Activated CD8-positive, alpha-beta T cell treated with anti-CD3 and anti-CD28 coated beads, Interleukin-2, amount 10 ng/mL, durations not matched to agents 7 days and 5 days (primary cell): ENCODE measurements at regions of chr7 and their contacts with region 1.

Region 1: GRCh38 chr7:12211054-12211710 is at the start of gene TMEM106B:
- DNase-seq: peak; percentile 98
- ATAC-seq: peak; percentile 93
- H3K4me3 Mint-ChIP-seq: peak within 1 kb of the TSS; percentile 91
- H3K27ac Mint-ChIP-seq: peak within 1 kb of the TSS; percentile 99
- H3K4me1 Mint-ChIP-seq: peaks cover 28% of the 10 kb centered on the region
- H3K27me3 Mint-ChIP-seq: peaks cover 7% of the 10 kb centered on the region
- total RNA-seq, gene TMEM106B: 43.7 to 48.9 TPM

Region 2: DNA sequence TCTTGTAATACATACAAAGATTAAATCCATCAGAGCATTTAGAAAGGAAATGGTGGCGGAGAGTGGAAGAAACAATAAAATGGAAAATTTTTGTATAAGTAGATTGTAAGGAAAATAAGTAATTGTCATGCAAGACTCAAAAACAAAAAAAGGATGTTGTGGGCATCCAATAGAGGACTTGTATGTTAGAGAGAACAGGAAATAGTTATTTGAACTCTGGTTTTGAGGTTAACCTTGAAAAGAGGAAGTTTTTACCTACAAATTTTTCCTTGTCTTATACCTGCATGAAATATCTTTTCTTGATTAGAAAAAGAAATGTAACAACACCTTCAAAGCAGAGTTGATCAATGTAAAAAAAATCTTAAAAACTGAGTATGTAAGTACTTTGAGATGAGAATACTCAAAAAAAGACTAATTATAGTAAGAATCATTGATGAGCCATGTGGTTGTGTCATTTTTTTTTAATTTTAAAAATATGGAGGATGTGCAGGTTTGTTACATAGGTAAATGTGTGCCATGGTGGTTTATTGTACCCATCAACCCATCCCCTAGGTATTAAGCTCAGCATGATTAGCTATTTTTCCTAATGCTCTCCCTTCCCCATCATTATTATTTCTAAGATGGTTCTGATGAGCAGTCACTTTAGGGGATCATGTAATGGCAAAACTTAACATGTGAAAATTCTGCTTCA is 11.9 kb after region 1 on chr7:
- CTCF ChIA-PET with region 1: interaction called, 3 read pairs
- POLR2A ChIA-PET with region 1: interaction called, 11 read pairs
- DNase-seq: no peak
- ATAC-seq: peak; percentile 82
- H3K4me3 Mint-ChIP-seq: peak overlapping the region; percentile 57
- H3K27ac Mint-ChIP-seq: peak overlapping the region; percentile 80
- H3K4me1 Mint-ChIP-seq: peaks cover 59% of the 10 kb centered on the region
- H3K27me3 Mint-ChIP-seq: no peaks in the 10 kb centered on the region

Region 3: DNA sequence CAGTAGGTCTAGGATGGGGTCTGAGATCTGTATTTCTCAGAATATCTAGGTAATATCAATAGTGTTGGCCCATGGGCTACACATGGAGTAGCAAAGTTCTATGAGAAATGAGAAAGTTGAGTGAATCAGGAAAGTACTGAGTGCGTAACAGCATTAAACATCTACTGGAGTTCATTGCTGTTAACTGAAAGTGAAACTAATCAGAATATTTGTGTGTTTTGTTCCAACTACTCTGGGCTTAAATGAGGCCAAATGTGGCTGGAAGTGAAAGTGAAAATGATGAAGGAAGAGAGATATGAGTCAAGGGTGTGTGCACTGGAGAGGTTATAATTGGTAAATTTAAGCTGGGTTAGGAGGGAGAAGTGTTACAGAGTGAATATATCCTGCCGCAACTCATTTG is 46.4 kb after region 1 on chr7:
- CTCF ChIA-PET with region 1: interaction called, 12 read pairs
- POLR2A ChIA-PET with region 1: interaction called, 11 read pairs
- DNase-seq: peak; percentile 71
- ATAC-seq: peak; percentile 99
- H3K4me3 Mint-ChIP-seq: no peak overlapping the region
- H3K27ac Mint-ChIP-seq: no peak overlapping the region
- H3K4me1 Mint-ChIP-seq: peaks cover 14% of the 10 kb centered on the region
- H3K27me3 Mint-ChIP-seq: no peaks in the 10 kb centered on the region

Region 4: DNA sequence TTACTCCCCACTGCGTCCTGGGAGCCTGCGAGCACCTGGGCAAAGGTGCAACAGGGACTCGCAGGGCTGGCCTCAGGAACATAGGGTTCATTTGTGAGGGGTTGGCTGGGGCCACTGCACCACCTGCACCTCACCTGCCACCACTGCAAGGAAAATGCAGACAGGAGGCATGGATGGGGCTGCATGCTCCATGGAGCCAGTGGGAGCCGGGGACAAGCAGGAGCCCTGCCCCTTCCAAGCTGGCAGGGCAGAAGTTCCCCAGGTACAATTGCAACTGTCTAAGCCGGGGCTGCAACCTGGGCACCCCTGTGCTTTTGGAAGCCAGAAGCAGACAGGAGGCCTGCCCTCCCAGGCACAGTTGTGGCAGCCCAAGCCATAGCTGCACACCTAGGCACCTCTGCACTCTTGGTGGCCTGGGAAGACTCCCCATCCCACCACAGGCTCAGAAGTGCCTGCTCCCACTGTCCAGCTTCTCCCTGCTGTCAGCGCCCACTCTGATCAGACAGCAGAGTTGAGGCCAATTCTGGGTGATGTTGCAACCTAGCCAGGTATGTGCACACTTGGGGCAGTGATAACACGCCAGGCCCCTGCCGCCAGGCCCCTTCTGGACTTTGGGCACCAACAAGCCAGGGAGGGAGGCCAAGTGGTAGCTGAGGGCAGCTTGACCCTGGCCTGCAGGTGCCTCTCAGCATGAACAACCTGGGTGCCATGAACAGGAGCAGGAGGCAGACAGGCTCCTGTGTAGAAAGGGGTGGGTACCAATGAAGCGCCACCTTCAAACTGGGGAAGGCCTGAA is 58.1 kb after region 1 on chr7:
- CTCF ChIA-PET with region 1: no interaction called
- POLR2A ChIA-PET with region 1: no interaction called
- DNase-seq: no peak
- ATAC-seq: no peak
- H3K4me3 Mint-ChIP-seq: no peak overlapping the region
- H3K27ac Mint-ChIP-seq: no peak overlapping the region
- H3K4me1 Mint-ChIP-seq: no peaks in the 10 kb centered on the region
- H3K27me3 Mint-ChIP-seq: peaks cover under 1% of the 10 kb centered on the region